Prostate gland (tissue), 2 donors: ENCODE measurements at regions of chr18 and their contacts with region 1.

Region 1: DNA sequence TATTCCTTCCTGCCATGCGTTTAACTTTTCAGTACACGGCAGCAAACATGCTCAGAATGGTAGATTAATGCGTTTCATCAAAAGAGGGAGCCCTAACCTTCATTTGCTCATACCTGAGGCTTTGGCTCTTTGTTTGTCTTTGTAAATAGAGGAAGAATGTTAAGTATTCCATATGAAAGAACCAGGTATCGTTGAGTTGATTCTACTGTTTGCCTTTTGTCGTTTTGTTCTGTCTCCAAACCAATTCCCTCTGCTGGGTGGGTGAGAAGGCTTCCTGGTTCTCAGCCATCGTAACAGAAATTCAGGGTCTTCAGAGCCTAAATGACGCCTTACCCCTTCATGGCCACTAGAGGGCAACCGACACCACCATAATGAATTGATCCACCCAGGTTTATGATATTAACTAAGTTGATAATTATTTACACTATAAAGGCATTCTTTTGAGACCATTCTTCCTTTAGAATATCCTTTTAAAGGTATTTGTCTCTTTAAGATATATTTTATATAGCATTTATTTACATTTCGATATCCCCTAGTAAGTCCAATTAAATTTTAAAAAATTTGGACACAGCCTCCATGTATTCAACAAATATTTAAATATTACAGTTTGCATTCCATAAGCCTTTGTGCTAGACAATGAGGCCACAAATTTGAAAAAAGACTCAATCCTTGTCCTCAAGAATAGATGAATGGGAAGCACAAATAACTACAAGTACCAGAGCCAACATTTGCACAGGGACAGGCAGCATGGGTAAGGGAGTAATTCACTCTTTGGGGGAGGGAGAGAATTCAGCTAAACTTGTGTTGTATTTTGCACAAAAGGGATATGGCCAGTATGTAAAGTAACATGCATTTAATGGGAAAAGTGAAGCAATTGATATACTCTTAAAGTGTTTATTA is 48.1 kb downstream of the TIMM21 start:
- DNase-seq: peak; percentile 58
- H3K4me3 ChIP-seq: peak overlapping the region in 1 of 2 donors; percentile 19
- H3K27ac ChIP-seq: peak overlapping the region; percentile 28 to 57
- H3K4me1 ChIP-seq: no peaks in the 10 kb centered on the region
- H3K27me3 ChIP-seq: no peaks in the 10 kb centered on the region
- CTCF ChIP-seq: peak; percentile 87 to 97 (median 90)
- POLR2A ChIP-seq: no peak

Region 2: GRCh38 chr18:74331404-74331803 is 134.9 kb after region 1 on chr18:
- intact Hi-C with region 1: no loop called
- DNase-seq: no peak
- H3K4me3 ChIP-seq: no peak overlapping the region
- H3K27ac ChIP-seq: no peak overlapping the region
- H3K4me1 ChIP-seq: no peaks in the 10 kb centered on the region
- H3K27me3 ChIP-seq: no peaks in the 10 kb centered on the region
- CTCF ChIP-seq: peak in 1 of 4 experiments; percentile 36
- POLR2A ChIP-seq: no peak

Region 3: GRCh38 chr18:74342416-74343043 is 146.1 kb after region 1 on chr18:
- intact Hi-C with region 1: loop called (anchors 2 kb)
- DNase-seq: peak; percentile 35
- H3K4me3 ChIP-seq: no peak overlapping the region
- H3K27ac ChIP-seq: no peak overlapping the region
- H3K4me1 ChIP-seq: no peaks in the 10 kb centered on the region
- H3K27me3 ChIP-seq: no peaks in the 10 kb centered on the region
- CTCF ChIP-seq: peak in 3 of 4 experiments; percentile 50 to 88 (median 82)
- POLR2A ChIP-seq: no peak

Region 4: GRCh38 chr18:74412116-74412880 is 215.8 kb after region 1 on chr18:
- intact Hi-C with region 1: no loop called
- DNase-seq: no peak
- H3K4me3 ChIP-seq: no peak overlapping the region
- H3K27ac ChIP-seq: no peak overlapping the region
- H3K4me1 ChIP-seq: no peaks in the 10 kb centered on the region
- H3K27me3 ChIP-seq: no peaks in the 10 kb centered on the region
- CTCF ChIP-seq: no peak
- POLR2A ChIP-seq: no peak

Region 5: GRCh38 chr18:74495581-74496507 is 299.4 kb after region 1 on chr18 and contains the start of gene CNDP2:
- intact Hi-C with region 1: no loop called
- DNase-seq: peak; percentile 100
- H3K4me3 ChIP-seq: peak within 1 kb of the TSS; percentile 86 to 94
- H3K27ac ChIP-seq: peak within 1 kb of the TSS; percentile 93 to 96
- H3K4me1 ChIP-seq: no peaks in the 10 kb centered on the region
- H3K27me3 ChIP-seq: no peaks in the 10 kb centered on the region
- CTCF ChIP-seq: peak in 1 of 4 experiments; percentile 24
- POLR2A ChIP-seq: peak; percentile 94
- total RNA-seq, gene CNDP2: 144 to 294 TPM

Region 6: DNA sequence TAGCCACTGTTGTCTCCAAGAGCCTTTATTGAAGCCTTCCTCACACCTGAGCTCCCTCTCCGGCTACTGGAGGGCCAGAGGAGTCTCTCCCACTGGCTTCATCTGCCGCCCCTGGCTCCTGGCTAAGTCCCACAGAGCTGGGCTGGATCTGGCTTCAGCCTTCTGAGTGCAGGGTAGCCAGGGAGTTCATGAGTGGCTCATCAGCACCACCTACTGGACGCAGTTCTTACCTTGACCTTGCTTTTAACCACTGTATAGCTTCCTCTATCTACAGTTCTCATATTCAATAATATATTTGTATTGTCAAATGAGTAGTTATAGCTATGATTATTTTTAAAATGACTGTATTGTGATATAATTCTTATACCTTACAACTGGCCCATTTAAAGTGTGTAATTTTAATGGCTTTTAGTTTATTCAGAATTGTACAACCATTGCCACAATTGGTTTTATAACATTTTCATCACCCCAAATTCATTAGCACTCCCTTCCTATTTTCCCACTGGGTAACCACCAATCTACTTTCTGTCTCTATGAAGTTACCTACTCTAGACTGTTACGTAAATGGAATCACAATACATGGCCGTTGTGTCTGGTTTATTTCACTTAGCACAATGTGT is 355.6 kb after region 1 on chr18:
- intact Hi-C with region 1: loop called (anchors 10 kb)
- DNase-seq: peak; percentile 86
- H3K4me3 ChIP-seq: no peak overlapping the region
- H3K27ac ChIP-seq: no peak overlapping the region
- H3K4me1 ChIP-seq: no peaks in the 10 kb centered on the region
- H3K27me3 ChIP-seq: no peaks in the 10 kb centered on the region
- CTCF ChIP-seq: peak; percentile 44 to 84 (median 81)
- POLR2A ChIP-seq: no peak